ENCODE measurements at regions of chr12 and their contacts with region 1.

Region 1: GRCh38 chr12:110280779-110281548 is at the start of gene ATP2A2:
- H3K4me3 ChIP-seq: peak within 1 kb of the TSS; percentile 92
- H3K27ac ChIP-seq: peak within 1 kb of the TSS; percentile 97
- H3K4me1 ChIP-seq: peaks cover 18% of the 10 kb centered on the region
- CTCF ChIP-seq: no peak; the same call in 1 of the 2 replicates

Region 2: DNA sequence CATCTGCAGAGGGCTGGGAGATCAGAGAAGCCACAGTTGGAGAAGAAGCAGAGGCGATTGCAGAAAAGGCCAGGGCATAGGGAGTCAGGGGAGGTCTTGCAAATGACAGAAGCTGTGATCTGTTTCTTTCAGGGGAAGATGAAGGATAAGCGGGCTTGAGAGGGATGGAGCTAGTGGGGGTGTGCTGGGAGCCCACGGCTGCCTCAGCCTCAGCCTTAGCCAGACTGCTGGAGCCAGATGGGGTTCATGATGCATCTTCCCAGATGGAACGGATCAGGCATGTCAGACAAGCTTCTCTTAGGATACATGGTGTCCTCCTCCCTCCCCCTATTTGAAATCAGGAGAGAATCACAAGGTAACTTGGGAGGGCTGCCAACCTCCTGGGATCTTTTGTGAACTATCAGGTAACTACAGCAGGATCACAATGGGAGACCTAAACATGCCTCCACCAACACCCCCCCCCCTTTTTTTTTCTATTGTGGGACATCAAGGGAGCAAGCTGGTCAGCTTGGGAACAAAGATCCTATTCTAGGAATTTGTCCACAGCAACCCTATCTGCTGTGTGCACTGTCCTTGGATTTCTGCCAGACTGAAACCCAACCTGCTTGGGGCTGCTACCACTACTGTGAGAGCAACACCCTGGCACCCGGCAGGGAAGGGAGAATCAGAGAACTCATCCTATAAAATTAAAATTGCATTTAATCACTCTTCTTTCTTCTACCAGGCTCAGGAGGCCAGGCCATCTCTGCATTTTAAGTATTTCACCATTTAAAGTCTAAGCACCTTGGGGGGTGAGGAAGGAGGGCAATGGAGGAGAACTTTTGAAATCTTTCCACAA is 10.6 kb before region 1 on chr12:
- CTCF ChIA-PET with region 1: interaction called, 11 read pairs
- POLR2A ChIA-PET with region 1: interaction called, 18 read pairs
- H3K4me3 ChIP-seq: no peak overlapping the region
- H3K27ac ChIP-seq: peak overlapping the region; percentile 42; the same call in 1 of the 2 replicates
- H3K4me1 ChIP-seq: peaks cover 33% of the 10 kb centered on the region
- CTCF ChIP-seq: no peak

Measured in HEK293 (cell line).